Activated CD4-positive, alpha-beta T cell treated with anti-CD3 and anti-CD28 coated beads for 36 hours (primary cell): ENCODE measurements at regions of chrX and their contacts with region 1.

Region 1: DNA sequence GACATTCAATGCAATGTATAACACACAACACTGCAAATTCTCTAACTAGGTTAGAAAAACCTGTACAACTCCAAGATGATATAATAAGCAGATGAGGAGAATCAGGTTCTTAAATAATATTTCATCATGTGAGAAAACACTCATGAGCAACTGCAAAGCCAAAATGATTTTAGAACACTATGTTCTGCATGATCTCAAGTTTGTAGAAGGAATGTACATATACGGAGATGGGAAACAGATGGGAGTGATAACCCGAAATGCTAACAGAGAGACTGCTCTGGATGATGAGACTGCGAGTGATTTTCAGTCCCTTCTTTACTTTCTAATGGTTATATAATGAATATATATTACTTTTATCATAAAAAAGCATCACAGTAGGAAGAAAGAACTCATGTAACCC is 80.9 kb downstream of the PCYT1B start:
- DNase-seq: no peak
- ATAC-seq: no peak
- H3K4me3 Mint-ChIP-seq: no peak overlapping the region
- H3K27ac Mint-ChIP-seq: no peak overlapping the region
- H3K4me1 Mint-ChIP-seq: no peaks in the 10 kb centered on the region
- H3K27me3 Mint-ChIP-seq: no peaks in the 10 kb centered on the region

Region 2: GRCh38 chrX:24380262-24381187 is 185.7 kb before region 1 on chrX:
- CTCF ChIA-PET with region 1: no interaction called
- POLR2A ChIA-PET with region 1: no interaction called
- intact Hi-C with region 1: loop called in 1 of 2 experiments (anchors 5 kb)
- DNase-seq: no peak
- ATAC-seq: no peak
- H3K4me3 Mint-ChIP-seq: no peak overlapping the region
- H3K27ac Mint-ChIP-seq: no peak overlapping the region
- H3K4me1 Mint-ChIP-seq: no peaks in the 10 kb centered on the region
- H3K27me3 Mint-ChIP-seq: no peaks in the 10 kb centered on the region